Heart left ventricle (tissue), 16 donors: ENCODE measurements at regions of chr9 and their contacts with region 1.

Region 1: GRCh38 chr9:79962836-79963235 is 391.1 kb downstream of the TLE4 start:
- DNase-seq: no peak
- ATAC-seq: no peak
- H3K4me3 ChIP-seq: no peak overlapping the region
- H3K27ac ChIP-seq: no peak overlapping the region
- H3K4me1 ChIP-seq: no peaks in the 10 kb centered on the region
- H3K27me3 ChIP-seq: peaks cover 0 to 10% (median 0%) of the 10 kb centered on the region in 9 donors
- CTCF ChIP-seq: no peak
- POLR2A ChIP-seq: no peak

Region 2: DNA sequence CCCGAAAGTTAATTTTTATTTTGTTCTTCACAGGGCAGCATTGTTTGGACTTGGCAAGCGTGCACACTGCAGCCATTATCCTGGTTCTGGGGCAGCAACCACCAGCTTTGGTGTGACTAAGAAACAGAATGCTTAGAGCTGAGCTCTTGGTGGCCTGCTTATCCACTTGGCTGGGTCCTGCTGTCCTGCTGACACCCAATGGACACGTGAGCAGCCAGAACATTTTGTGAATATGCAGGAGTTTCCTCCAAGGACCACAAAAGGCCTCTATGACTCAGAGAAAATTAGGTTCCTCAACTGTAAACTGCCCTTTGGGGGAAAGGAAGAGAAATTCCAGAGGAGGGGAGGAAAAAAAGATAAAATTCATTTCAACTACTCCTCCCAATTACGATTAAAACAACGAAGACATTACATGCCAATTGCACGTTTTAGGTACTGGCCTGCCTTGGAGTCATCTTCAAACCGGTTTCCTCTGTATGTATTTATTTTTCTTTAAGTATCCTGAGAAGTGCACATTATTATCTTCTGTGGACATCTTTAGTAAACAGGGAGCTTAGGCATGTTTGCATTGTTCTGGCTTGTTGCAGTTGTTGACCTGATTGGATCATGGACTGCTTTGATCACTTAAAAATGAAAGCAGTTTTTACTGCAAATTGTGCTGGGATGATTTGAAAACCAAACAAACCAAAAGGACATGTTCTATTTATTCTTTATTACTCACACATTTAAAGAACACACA is 473.4 kb before region 1 on chr9:
- intact Hi-C with region 1: loop called in 1 of 10 experiments (anchors 10 kb)
- DNase-seq: peak in 1 of 5 donors; percentile 21
- ATAC-seq: peak in 3 of 4 donors; percentile 41 to 78 (median 55)
- H3K4me3 ChIP-seq: no peak overlapping the region
- H3K27ac ChIP-seq: no peak overlapping the region
- H3K4me1 ChIP-seq: peaks cover 0 to 12% (median 0%) of the 10 kb centered on the region in 12 donors
- H3K27me3 ChIP-seq: no peaks in the 10 kb centered on the region
- CTCF ChIP-seq: no peak
- POLR2A ChIP-seq: no peak

Region 3: GRCh38 chr9:79917421-79917820 is 45.4 kb before region 1 on chr9:
- intact Hi-C with region 1: no loop called
- DNase-seq: no peak
- ATAC-seq: no peak
- H3K4me3 ChIP-seq: no peak overlapping the region
- H3K27ac ChIP-seq: no peak overlapping the region
- H3K4me1 ChIP-seq: no peaks in the 10 kb centered on the region
- H3K27me3 ChIP-seq: no peaks in the 10 kb centered on the region
- CTCF ChIP-seq: no peak
- POLR2A ChIP-seq: no peak

Region 4: DNA sequence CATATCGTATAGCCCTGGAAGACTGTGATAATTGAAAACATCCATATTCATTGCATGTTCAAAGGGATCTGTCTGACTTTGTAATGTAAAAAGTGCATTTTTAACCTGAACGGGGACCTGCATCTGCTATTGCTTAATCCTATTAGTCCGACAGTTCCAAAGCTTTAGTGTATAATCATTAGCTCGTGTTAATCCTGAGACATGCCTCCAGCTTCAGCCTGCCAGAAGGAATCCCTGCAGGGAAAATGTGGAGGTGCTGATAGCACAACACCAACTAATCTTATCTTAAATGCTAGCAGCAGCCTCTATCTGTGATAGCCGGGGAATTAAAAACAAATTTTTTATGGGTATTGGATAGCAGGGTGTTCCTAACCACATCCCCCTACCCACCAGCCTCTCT is 104.1 kb after region 1 on chr9:
- intact Hi-C with region 1: no loop called
- DNase-seq: no peak
- ATAC-seq: no peak
- H3K4me3 ChIP-seq: no peak overlapping the region
- H3K27ac ChIP-seq: no peak overlapping the region
- H3K4me1 ChIP-seq: peaks cover 0 to 9% (median 0%) of the 10 kb centered on the region in 12 donors
- H3K27me3 ChIP-seq: peaks cover 0 to 11% (median 0%) of the 10 kb centered on the region in 9 donors
- CTCF ChIP-seq: no peak
- POLR2A ChIP-seq: no peak